ENCODE measurements at regions of chr5 and their contacts with region 1.

Region 1: DNA sequence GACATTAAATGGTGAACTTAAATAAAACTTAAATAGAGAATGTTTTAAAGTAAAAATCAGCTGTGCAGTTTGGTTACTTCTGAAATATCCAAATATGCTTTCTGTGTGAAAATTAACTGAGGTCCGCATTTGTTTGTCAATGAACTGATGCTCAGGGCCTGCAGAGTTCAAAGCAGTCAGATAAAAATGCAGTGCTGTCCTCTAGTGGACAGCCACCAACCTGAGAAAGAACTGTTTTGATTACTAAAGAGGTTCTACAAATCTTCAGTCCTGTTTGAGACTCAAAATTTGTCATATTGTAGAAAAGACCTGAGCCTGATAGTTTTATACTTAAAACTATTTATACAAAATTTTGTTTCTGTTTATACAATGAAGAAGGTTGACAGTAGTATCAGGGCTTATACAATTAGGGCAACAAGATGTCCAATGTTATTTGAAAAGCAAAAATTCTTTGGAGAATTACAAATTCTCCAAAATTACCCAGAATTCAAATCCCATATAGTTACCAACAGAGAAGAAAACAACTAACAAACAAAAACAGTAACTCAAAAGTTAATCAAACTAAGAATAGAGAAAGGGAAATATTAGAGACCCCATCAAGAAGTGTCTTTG is 232.3 kb upstream of the TBCA start:
- DNase-seq: no peak
- ATAC-seq: no peak
- H3K4me3 ChIP-seq: no peak overlapping the region
- H3K27ac ChIP-seq: no peak overlapping the region
- H3K4me1 ChIP-seq: peaks cover 0 to 5% of the 10 kb centered on the region in 2 donors
- H3K27me3 ChIP-seq: no peaks in the 10 kb centered on the region

Region 2: GRCh38 chr5:77645158-77645994 is 363.1 kb before region 1 on chr5:
- intact Hi-C with region 1: loop called in 1 of 2 experiments (anchors 10 kb)
- DNase-seq: no peak
- ATAC-seq: peak; percentile 43
- H3K4me3 ChIP-seq: peak overlapping the region; percentile 23 to 35
- H3K27ac ChIP-seq: no peak overlapping the region
- H3K4me1 ChIP-seq: peaks cover 0 to 3% of the 10 kb centered on the region in 2 donors
- H3K27me3 ChIP-seq: no peaks in the 10 kb centered on the region

Region 3: GRCh38 chr5:77725616-77726015 is 282.8 kb before region 1 on chr5:
- intact Hi-C with region 1: no loop called
- DNase-seq: no peak
- ATAC-seq: no peak
- H3K4me3 ChIP-seq: no peak overlapping the region
- H3K27ac ChIP-seq: no peak overlapping the region
- H3K4me1 ChIP-seq: no peaks in the 10 kb centered on the region
- H3K27me3 ChIP-seq: no peaks in the 10 kb centered on the region

Region 4: DNA sequence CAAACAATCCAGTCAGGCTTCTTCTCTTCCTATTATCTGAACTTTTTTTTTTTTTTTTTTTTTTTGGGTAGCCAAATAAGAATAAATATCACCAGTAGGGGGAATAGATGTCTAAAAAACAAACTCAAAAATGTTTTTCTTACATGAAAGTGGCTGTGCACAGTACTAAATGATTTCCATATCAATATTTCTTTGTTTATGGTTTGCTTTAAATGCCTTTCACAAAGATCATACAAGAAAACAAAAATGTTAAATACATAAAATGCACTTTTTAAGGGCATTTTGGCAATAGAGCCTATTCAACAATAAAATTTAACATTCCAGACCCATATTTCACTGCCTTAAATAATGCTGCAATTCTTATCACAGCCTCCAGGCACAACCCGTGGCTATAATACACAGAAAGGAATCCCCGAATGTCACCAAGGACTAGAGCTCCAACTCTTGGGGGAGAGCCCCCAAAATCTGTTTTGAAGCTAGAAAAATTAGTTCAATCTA is 141.2 kb before region 1 on chr5:
- intact Hi-C with region 1: loop called in 1 of 2 experiments (anchors 10 kb)
- DNase-seq: no peak
- ATAC-seq: no peak
- H3K4me3 ChIP-seq: no peak overlapping the region
- H3K27ac ChIP-seq: no peak overlapping the region
- H3K4me1 ChIP-seq: no peaks in the 10 kb centered on the region
- H3K27me3 ChIP-seq: no peaks in the 10 kb centered on the region

Region 5: DNA sequence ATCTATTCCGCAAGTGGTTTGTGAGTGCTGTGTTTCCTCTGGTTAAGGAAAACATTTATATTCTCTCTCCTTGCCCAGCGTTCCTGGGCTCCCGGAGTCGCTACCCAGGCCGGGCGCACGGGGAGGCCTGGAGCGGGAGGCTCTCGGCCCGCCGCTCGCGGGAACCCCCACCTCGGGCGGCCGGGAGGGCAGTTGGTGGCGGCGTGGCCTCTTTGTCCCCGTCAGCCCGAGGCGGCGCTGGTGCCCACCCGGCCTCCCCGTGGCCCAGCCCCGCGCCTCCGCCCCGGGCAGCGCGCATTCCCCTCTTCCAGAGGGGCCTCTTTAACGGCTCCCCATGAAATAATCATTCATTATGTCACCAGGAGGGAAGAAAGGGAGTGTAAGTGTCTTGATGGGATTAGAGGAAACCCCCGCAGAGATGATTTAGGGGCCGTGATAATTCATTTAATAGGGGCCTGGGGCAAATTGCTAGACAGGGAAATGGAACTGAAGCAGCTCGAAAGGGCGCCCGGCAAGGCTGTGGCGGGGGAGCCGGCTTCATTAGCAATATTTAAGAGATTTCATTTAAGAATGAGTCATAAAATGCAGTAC is 50.4 kb before region 1 on chr5:
- intact Hi-C with region 1: no loop called
- DNase-seq: no peak
- ATAC-seq: no peak
- H3K4me3 ChIP-seq: no peak overlapping the region
- H3K27ac ChIP-seq: no peak overlapping the region
- H3K4me1 ChIP-seq: no peaks in the 10 kb centered on the region
- H3K27me3 ChIP-seq: no peaks in the 10 kb centered on the region

Measured in aorta (tissue), 5 donors.